Endothelial cell of umbilical vein (primary cell): ENCODE measurements at regions of chr15 and their contacts with region 1.

Region 1: GRCh38 chr15:39580117-39580484 is 778 bp upstream of the THBS1 start:
- DNase-seq: peak; percentile 93
- H3K4me3 ChIP-seq: peak overlapping the region; percentile 7 to 61 (median 55)
- H3K27ac ChIP-seq: peak overlapping the region; percentile 98
- H3K4me1 ChIP-seq: peaks cover 20% of the 10 kb centered on the region
- H3K27me3 ChIP-seq: no peaks in the 10 kb centered on the region
- CTCF ChIP-seq: peak; percentile 93 to 96
- POLR2A ChIP-seq: peak; percentile 74

Region 2: DNA sequence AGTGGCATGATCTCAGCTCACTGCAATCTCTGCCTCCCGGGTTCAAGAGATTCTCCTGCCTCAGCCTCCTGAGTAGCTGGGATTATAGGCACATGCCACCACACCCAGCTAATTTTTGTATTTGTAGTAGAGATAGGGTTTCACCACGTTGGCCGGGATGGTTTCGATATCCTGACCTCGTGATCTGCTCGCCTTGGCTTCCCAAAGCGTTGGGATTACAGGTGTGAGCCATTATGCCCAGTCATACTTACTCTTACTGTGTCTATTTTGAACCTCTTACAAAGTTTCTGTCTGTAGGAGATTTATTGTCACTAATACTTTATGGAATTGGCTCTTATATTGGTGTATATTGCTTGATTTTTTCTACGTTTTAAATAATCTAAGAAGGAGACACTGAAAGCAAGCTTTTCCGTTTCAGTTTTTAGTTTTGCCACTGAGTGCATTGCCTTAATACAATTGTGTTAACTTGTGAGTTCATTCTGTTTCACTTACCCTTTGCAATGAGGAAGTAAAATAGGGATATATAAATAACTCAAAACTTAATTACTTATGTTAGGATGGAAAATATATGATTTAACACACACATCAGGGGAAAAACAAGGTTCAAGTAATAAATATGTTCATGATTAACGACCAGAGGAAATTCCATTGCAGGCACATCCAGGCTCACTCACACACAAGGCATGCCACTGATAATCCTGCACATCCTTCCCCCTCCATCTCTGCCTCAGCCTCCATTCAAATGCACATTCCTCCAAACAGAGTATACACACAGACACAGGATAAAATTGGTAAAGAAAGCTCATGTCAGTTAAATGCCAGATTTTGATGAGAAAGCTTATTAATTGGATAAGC is 736.1 kb before region 1 on chr15:
- CTCF ChIA-PET with region 1: no interaction called
- POLR2A ChIA-PET with region 1: interaction called, 6 read pairs
- dilution Hi-C with region 1: no loop called
- intact Hi-C with region 1: loop called (anchors 5 kb)
- DNase-seq: peak; percentile 95
- H3K4me3 ChIP-seq: peak overlapping the region in 1 of 3 experiments; percentile 15
- H3K27ac ChIP-seq: peak overlapping the region; percentile 98
- H3K4me1 ChIP-seq: peaks cover 41% of the 10 kb centered on the region
- H3K27me3 ChIP-seq: no peaks in the 10 kb centered on the region
- CTCF ChIP-seq: no peak
- POLR2A ChIP-seq: peak; percentile 61

Region 3: DNA sequence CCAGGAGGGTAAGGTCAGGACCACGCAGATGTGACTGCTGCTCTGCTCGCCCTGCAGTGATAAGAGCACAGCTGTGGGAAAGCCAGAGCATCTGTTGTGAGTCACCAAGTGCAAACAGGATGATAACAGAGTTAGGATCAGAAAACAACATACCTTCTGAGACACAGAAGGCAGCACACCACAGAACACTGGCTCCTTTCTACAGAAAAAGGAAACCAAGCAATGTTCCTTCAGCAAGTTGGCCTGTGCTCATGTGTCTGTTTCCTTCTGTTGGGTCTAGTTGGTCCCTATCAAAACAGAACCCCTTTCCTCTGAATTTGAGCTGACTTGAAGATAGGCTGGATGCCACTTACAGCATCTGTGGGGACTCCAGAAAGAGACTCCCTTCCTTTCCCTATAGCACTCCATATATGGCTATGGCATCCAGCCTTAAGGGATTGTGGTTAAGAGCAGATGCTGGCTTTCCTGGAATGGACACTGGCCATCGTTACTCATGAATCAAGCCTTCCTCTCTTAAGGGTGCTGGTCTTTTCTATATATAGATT is 440.0 kb before region 1 on chr15:
- CTCF ChIA-PET with region 1: interaction called, 5 read pairs
- POLR2A ChIA-PET with region 1: interaction called, 21 read pairs
- dilution Hi-C with region 1: no loop called
- intact Hi-C with region 1: loop called (anchors 1 kb)
- DNase-seq: peak; percentile 100
- H3K4me3 ChIP-seq: no peak overlapping the region
- H3K27ac ChIP-seq: peak overlapping the region; percentile 96
- H3K4me1 ChIP-seq: peaks cover 34% of the 10 kb centered on the region
- H3K27me3 ChIP-seq: no peaks in the 10 kb centered on the region
- CTCF ChIP-seq: no peak
- POLR2A ChIP-seq: peak; percentile 90

Region 4: GRCh38 chr15:39260391-39260790 is 319.7 kb before region 1 on chr15:
- CTCF ChIA-PET with region 1: interaction called, 10 read pairs
- POLR2A ChIA-PET with region 1: interaction called, 19 read pairs
- dilution Hi-C with region 1: no loop called
- intact Hi-C with region 1: loop called (anchors 1 kb)
- DNase-seq: no peak
- H3K4me3 ChIP-seq: no peak overlapping the region
- H3K27ac ChIP-seq: peak overlapping the region; percentile 95
- H3K4me1 ChIP-seq: peaks cover 32% of the 10 kb centered on the region
- H3K27me3 ChIP-seq: no peaks in the 10 kb centered on the region
- CTCF ChIP-seq: no peak
- POLR2A ChIP-seq: no peak

Region 5: GRCh38 chr15:39429898-39430357 is 150.2 kb before region 1 on chr15:
- CTCF ChIA-PET with region 1: interaction called, 19 read pairs
- POLR2A ChIA-PET with region 1: interaction called, 31 read pairs
- dilution Hi-C with region 1: no loop called
- intact Hi-C with region 1: loop called (anchors 1 kb)
- DNase-seq: peak; percentile 99
- H3K4me3 ChIP-seq: no peak overlapping the region
- H3K27ac ChIP-seq: peak overlapping the region; percentile 98
- H3K4me1 ChIP-seq: peaks cover 52% of the 10 kb centered on the region
- H3K27me3 ChIP-seq: no peaks in the 10 kb centered on the region
- CTCF ChIP-seq: no peak
- POLR2A ChIP-seq: peak; percentile 75